Naive thymus-derived CD4-positive, alpha-beta T cell (primary cell): ENCODE measurements at regions of chr4 and their contacts with region 1.

Region 1: GRCh38 chr4:103008875-103009729 is 10.4 kb downstream of the SLC9B1 start:
- DNase-seq: peak in 7 of 9 donors; percentile 39 to 67 (median 56)
- ATAC-seq: peak; percentile 93
- H3K4me3 ChIP-seq: no peak overlapping the region
- H3K4me3 Mint-ChIP-seq: no peak overlapping the region
- H3K27ac ChIP-seq: no peak overlapping the region
- H3K27ac Mint-ChIP-seq: no peak overlapping the region
- H3K4me1 ChIP-seq: no peaks in the 10 kb centered on the region
- H3K4me1 Mint-ChIP-seq: peaks cover 0 to 3% (median 0%) of the 10 kb centered on the region in 7 donors
- H3K27me3 ChIP-seq: no peaks in the 10 kb centered on the region
- H3K27me3 Mint-ChIP-seq: peaks cover 0 to 14% (median 0%) of the 10 kb centered on the region in 5 donors

Region 2: GRCh38 chr4:102255454-102255853 is 753.6 kb before region 1 on chr4:
- CTCF ChIA-PET with region 1: interaction called, 3 read pairs
- POLR2A ChIA-PET with region 1: no interaction called
- intact Hi-C with region 1: loop called (anchors 1 to 10 kb)
- DNase-seq: no peak
- ATAC-seq: no peak
- H3K4me3 ChIP-seq: no peak overlapping the region
- H3K4me3 Mint-ChIP-seq: no peak overlapping the region
- H3K27ac ChIP-seq: no peak overlapping the region
- H3K27ac Mint-ChIP-seq: no peak overlapping the region
- H3K4me1 ChIP-seq: no peaks in the 10 kb centered on the region
- H3K4me1 Mint-ChIP-seq: peaks cover 0 to 9% (median 0%) of the 10 kb centered on the region in 7 donors
- H3K27me3 ChIP-seq: no peaks in the 10 kb centered on the region
- H3K27me3 Mint-ChIP-seq: no peaks in the 10 kb centered on the region

Region 3: DNA sequence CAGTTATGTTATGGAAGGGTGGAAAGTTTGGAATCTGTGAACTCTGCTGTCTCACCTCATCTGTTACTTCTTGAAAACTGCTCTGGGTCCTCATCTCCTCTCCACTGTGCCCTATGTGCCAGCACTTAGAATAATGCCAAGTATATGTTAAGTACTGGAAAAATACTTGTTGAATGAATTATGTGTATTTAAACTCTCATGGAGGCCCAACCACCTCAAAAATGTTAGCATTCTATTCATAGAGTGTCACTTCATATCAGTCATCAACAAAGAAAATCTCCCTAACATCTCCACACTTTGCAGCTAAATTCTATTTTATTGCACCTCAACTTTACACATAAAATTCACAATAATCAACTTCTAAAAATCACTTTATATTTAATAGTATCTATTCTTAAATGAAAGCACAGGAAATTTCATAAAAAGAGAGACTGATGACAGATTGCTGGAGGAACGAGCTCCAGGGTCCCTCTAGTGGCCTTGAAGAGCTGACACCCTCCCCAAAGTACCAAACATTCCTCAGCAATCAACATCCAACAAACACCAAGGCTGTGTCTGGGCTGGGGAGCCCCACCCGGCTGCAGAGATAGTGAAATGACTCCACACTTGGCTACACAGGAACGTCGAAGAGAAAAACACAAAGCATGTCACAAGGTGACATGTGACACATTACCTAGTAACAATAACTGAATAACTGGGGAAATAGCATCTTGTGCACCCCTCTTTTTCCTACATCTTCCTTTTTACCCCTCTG is 709.6 kb before region 1 on chr4:
- CTCF ChIA-PET with region 1: no interaction called
- POLR2A ChIA-PET with region 1: no interaction called
- intact Hi-C with region 1: loop called in 1 of 2 experiments (anchors 1 kb)
- DNase-seq: peak in 6 of 9 donors; percentile 12 to 32 (median 26)
- ATAC-seq: peak; percentile 74
- H3K4me3 ChIP-seq: no peak overlapping the region
- H3K4me3 Mint-ChIP-seq: no peak overlapping the region
- H3K27ac ChIP-seq: no peak overlapping the region
- H3K27ac Mint-ChIP-seq: no peak overlapping the region
- H3K4me1 ChIP-seq: no peaks in the 10 kb centered on the region
- H3K4me1 Mint-ChIP-seq: peaks cover 0 to 8% (median 4%) of the 10 kb centered on the region in 7 donors
- H3K27me3 ChIP-seq: no peaks in the 10 kb centered on the region
- H3K27me3 Mint-ChIP-seq: no peaks in the 10 kb centered on the region

Region 4: GRCh38 chr4:102525097-102525496 is 484.0 kb before region 1 on chr4:
- CTCF ChIA-PET with region 1: no interaction called
- POLR2A ChIA-PET with region 1: no interaction called
- intact Hi-C with region 1: loop called in 1 of 2 experiments (anchors 5 kb)
- DNase-seq: no peak
- ATAC-seq: peak; percentile 51
- H3K4me3 ChIP-seq: no peak overlapping the region
- H3K4me3 Mint-ChIP-seq: peak overlapping the region in 3 of 10 donors; percentile 7 to 56 (median 8)
- H3K27ac ChIP-seq: no peak overlapping the region
- H3K27ac Mint-ChIP-seq: peak overlapping the region in 8 of 9 donors; percentile 11 to 95 (median 75)
- H3K4me1 ChIP-seq: peaks cover 11 to 63% of the 10 kb centered on the region in 2 donors
- H3K4me1 Mint-ChIP-seq: peaks cover 52 to 100% (median 90%) of the 10 kb centered on the region in 7 donors
- H3K27me3 ChIP-seq: no peaks in the 10 kb centered on the region
- H3K27me3 Mint-ChIP-seq: no peaks in the 10 kb centered on the region

Region 5: DNA sequence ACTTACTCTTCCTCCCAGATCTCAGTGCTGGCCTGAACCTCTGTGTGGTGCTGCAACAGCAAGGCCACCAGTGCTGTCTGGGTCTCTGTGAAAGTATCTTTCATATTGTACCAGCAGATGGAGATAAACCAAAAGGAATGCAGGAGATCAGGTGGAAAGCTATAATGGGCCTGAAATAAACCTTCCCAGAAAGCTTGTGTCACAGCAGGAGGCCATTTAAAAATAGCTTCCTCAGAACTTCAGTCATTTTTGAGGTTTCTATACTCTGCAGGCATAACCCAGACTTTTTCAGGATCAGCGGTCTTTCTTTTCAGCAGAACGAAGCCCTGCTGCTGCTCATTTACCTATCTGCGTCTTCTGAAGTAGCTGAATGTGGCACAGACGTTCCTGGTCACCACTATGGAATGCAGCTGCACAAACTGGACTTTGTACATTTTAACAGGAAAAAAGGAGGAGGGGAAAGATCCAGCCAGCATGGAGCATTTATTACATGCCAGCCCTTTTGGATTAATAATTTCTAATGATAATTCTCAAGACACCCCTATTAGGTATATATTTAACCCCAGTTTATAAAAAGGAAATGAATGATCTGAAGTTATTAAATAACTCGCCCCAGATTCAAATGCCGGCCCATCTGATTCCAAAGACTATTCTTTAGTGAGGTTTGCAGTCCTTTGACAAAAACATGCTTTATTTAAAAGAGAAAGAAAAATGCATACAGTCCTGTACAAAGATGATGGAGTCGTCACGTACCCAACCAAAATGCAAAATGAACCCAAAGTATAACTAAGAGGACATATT is 388.2 kb before region 1 on chr4:
- CTCF ChIA-PET with region 1: interaction called, 20 read pairs
- POLR2A ChIA-PET with region 1: no interaction called
- intact Hi-C with region 1: loop called (anchors 1 kb)
- DNase-seq: peak in 2 of 9 donors; percentile 34 to 45
- ATAC-seq: peak; percentile 65
- H3K4me3 ChIP-seq: no peak overlapping the region
- H3K4me3 Mint-ChIP-seq: peak overlapping the region in 3 of 10 donors; percentile 9 to 42 (median 32)
- H3K27ac ChIP-seq: no peak overlapping the region
- H3K27ac Mint-ChIP-seq: peak overlapping the region in 7 of 9 donors; percentile 20 to 85 (median 59)
- H3K4me1 ChIP-seq: peaks cover 7 to 18% of the 10 kb centered on the region in 2 donors
- H3K4me1 Mint-ChIP-seq: peaks cover 15 to 73% (median 46%) of the 10 kb centered on the region in 7 donors
- H3K27me3 ChIP-seq: no peaks in the 10 kb centered on the region
- H3K27me3 Mint-ChIP-seq: no peaks in the 10 kb centered on the region

Region 6: GRCh38 chr4:102809190-102809589 is 199.9 kb before region 1 on chr4:
- CTCF ChIA-PET with region 1: no interaction called
- POLR2A ChIA-PET with region 1: no interaction called
- intact Hi-C with region 1: loop called in 1 of 2 experiments (anchors 5 kb)
- DNase-seq: peak in 4 of 9 donors; percentile 18 to 30 (median 28)
- ATAC-seq: peak; percentile 65
- H3K4me3 ChIP-seq: no peak overlapping the region
- H3K4me3 Mint-ChIP-seq: peak overlapping the region in 8 of 10 donors; percentile 13 to 63 (median 46)
- H3K27ac ChIP-seq: peak overlapping the region; percentile 14
- H3K27ac Mint-ChIP-seq: peak overlapping the region in 8 of 9 donors; percentile 20 to 90 (median 57)
- H3K4me1 ChIP-seq: peaks cover 51 to 59% of the 10 kb centered on the region in 2 donors
- H3K4me1 Mint-ChIP-seq: peaks cover 53 to 93% (median 86%) of the 10 kb centered on the region in 7 donors
- H3K27me3 ChIP-seq: no peaks in the 10 kb centered on the region
- H3K27me3 Mint-ChIP-seq: no peaks in the 10 kb centered on the region

Region 7: DNA sequence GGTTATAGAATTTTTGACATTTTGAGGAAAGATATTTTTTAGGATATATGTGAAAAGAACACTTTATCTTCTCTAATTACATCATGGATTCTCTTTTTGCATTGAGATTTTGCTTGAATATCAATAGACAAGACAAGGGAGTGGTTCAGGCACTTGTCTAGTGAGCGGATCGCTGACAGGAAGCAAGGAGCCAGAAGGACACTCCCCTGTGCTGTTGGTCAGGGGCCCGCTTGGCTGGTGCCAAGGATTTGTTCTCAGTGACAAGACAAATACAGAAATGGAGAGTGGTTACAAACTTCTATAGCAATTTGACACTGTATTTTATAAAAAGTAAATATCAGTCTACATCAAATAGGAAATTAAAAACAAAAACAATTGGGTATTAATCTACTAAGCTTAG is 49.6 kb before region 1 on chr4:
- CTCF ChIA-PET with region 1: no interaction called
- POLR2A ChIA-PET with region 1: no interaction called
- intact Hi-C with region 1: no loop called
- DNase-seq: no peak
- ATAC-seq: no peak
- H3K4me3 ChIP-seq: no peak overlapping the region
- H3K4me3 Mint-ChIP-seq: no peak overlapping the region
- H3K27ac ChIP-seq: no peak overlapping the region
- H3K27ac Mint-ChIP-seq: no peak overlapping the region
- H3K4me1 ChIP-seq: no peaks in the 10 kb centered on the region
- H3K4me1 Mint-ChIP-seq: no peaks in the 10 kb centered on the region
- H3K27me3 ChIP-seq: no peaks in the 10 kb centered on the region
- H3K27me3 Mint-ChIP-seq: no peaks in the 10 kb centered on the region

Region 8: DNA sequence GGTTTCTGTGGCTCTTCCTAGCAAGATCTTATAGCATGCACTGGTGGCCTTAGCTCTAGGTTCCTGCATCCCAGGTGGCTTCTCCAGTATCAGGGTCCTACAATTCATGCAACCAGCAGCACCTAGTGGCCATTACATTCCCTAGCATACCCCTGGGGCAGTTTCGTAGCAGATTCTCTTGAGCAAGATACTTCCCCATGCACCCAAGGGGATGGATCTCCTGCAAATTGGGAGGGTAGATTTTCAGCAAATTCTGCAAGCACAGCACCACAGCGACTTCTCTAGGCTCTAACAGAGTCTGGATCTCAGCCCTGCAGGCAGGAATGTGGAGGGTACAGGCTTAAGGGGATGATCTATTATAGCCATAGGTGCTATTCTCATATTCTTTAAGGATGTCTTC is 23.5 kb after region 1 on chr4:
- CTCF ChIA-PET with region 1: no interaction called
- POLR2A ChIA-PET with region 1: no interaction called
- intact Hi-C with region 1: no loop called
- DNase-seq: peak in 2 of 9 donors; percentile 2 to 4
- ATAC-seq: no peak
- H3K4me3 ChIP-seq: no peak overlapping the region
- H3K4me3 Mint-ChIP-seq: no peak overlapping the region
- H3K27ac ChIP-seq: no peak overlapping the region
- H3K27ac Mint-ChIP-seq: no peak overlapping the region
- H3K4me1 ChIP-seq: no peaks in the 10 kb centered on the region
- H3K4me1 Mint-ChIP-seq: peaks cover 0 to 19% (median 0%) of the 10 kb centered on the region in 7 donors
- H3K27me3 ChIP-seq: no peaks in the 10 kb centered on the region
- H3K27me3 Mint-ChIP-seq: no peaks in the 10 kb centered on the region

Region 9: DNA sequence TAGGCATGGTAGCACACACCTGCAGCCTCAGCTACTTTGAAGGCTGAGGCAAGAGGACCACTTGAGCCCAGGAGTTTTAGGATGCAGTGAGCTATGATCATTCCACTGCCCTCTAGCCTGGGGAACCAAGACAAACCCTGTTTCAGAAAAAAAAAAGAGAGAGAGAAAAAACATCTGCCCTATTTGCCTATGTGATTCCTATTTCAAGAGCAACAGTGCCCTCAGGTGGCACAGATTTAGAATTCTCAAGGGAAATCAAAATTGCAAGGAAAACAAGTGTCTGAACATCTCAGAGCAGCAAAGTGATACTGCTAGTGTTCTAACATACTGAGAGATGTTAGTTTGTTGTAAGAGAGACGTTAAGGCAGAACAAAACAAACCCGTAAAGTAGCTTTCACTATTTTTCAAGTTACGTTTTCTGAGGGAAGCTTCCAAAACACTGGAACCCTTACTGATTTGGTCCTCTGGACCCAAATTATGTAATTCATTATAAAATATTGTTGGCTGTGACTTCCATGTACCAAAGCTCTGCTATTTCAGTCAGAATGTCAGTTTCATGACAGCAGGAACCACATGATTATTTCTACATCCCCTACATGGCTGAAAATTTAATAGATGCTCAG is 82.6 kb after region 1 on chr4:
- CTCF ChIA-PET with region 1: interaction called, 5 read pairs
- POLR2A ChIA-PET with region 1: no interaction called
- intact Hi-C with region 1: loop called (anchors 1 kb)
- DNase-seq: peak in 7 of 9 donors; percentile 36 to 65 (median 50)
- ATAC-seq: peak; percentile 80
- H3K4me3 ChIP-seq: no peak overlapping the region
- H3K4me3 Mint-ChIP-seq: peak overlapping the region in 1 of 10 donors; percentile 78
- H3K27ac ChIP-seq: no peak overlapping the region
- H3K27ac Mint-ChIP-seq: peak overlapping the region in 3 of 9 donors; percentile 2 to 72 (median 41)
- H3K4me1 ChIP-seq: no peaks in the 10 kb centered on the region
- H3K4me1 Mint-ChIP-seq: peaks cover 0 to 26% (median 20%) of the 10 kb centered on the region in 7 donors
- H3K27me3 ChIP-seq: no peaks in the 10 kb centered on the region
- H3K27me3 Mint-ChIP-seq: no peaks in the 10 kb centered on the region